ENCODE measurements at regions of chr17 and their contacts with region 1.

Region 1: DNA sequence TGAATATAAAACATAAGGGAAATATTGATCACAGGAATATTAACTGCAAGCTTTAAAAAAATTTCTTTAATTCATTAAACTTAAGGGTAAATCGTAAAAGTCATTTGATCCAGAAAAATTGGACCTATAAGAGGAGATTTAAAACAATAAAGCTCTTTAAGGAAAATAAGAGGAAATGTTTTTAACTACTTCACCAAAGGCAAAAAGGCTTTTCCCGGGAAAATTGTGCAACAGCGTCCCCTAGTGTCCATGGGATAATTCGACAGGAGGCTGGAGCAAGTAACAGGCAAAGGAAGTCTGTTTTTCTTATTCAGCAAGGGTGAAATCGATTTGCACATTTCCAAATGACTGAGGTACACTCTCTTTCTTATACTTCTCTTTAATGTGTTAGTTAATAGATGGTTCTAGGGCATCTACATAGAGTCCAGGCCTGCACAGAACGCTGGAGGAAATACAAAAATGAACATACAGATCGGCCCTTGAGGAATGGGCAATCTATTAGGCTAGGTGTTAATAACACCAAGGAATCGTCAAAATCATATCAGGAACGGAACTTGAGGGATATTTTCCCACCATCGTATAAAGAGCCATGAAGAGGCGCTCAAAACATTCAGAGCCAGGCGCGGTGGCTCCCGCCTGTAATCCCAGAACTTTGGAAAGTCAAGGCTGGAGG is 61.4 kb downstream of the ZNF18 start:
- DNase-seq: peak in 4 of 5 donors; percentile 31 to 41 (median 36)
- ATAC-seq: no peak
- H3K4me3 ChIP-seq: no peak overlapping the region
- H3K27ac ChIP-seq: no peak overlapping the region
- H3K4me1 ChIP-seq: no peaks in the 10 kb centered on the region
- H3K27me3 ChIP-seq: peaks cover 0 to 4% (median 0%) of the 10 kb centered on the region in 9 donors
- CTCF ChIP-seq: peak; percentile 76 to 96 (median 84)
- POLR2A ChIP-seq: no peak

Region 2: GRCh38 chr17:11430751-11431150 is 505.1 kb before region 1 on chr17:
- intact Hi-C with region 1: loop called in 1 of 10 experiments (anchors 5 kb)
- DNase-seq: no peak
- ATAC-seq: no peak
- H3K4me3 ChIP-seq: no peak overlapping the region
- H3K27ac ChIP-seq: no peak overlapping the region
- H3K4me1 ChIP-seq: no peaks in the 10 kb centered on the region
- H3K27me3 ChIP-seq: no peaks in the 10 kb centered on the region
- CTCF ChIP-seq: no peak
- POLR2A ChIP-seq: no peak

Region 3: GRCh38 chr17:11768106-11768505 is 167.8 kb before region 1 on chr17:
- intact Hi-C with region 1: loop called in 1 of 10 experiments (anchors 10 kb)
- DNase-seq: no peak
- ATAC-seq: no peak
- H3K4me3 ChIP-seq: no peak overlapping the region
- H3K27ac ChIP-seq: no peak overlapping the region
- H3K4me1 ChIP-seq: peaks cover 0 to 14% (median 0%) of the 10 kb centered on the region in 12 donors
- H3K27me3 ChIP-seq: no peaks in the 10 kb centered on the region
- CTCF ChIP-seq: no peak
- POLR2A ChIP-seq: no peak

Measured in heart left ventricle (tissue), 16 donors.